ENCODE measurements at regions of chr3 and their contacts with region 1.

Region 1: GRCh38 chr3:32391643-32392535 is at the start of gene CMTM7:
- DNase-seq: peak; percentile 57 to 81 (median 67)
- H3K4me3 ChIP-seq: peak within 1 kb of the TSS; percentile 63 to 75
- H3K4me3 Mint-ChIP-seq: peak within 1 kb of the TSS; percentile 95 to 99 (median 97)
- H3K27ac ChIP-seq: peak within 1 kb of the TSS; percentile 76
- H3K27ac Mint-ChIP-seq: peak within 1 kb of the TSS; percentile 95 to 98 (median 97)
- H3K4me1 ChIP-seq: peaks cover 57% of the 10 kb centered on the region
- H3K4me1 Mint-ChIP-seq: peaks cover 36 to 64% (median 46%) of the 10 kb centered on the region in 4 donors
- H3K27me3 ChIP-seq: no peaks in the 10 kb centered on the region
- H3K27me3 Mint-ChIP-seq: no peaks in the 10 kb centered on the region
- total RNA-seq, gene CMTM7: 44.2 to 48.0 TPM

Region 2: DNA sequence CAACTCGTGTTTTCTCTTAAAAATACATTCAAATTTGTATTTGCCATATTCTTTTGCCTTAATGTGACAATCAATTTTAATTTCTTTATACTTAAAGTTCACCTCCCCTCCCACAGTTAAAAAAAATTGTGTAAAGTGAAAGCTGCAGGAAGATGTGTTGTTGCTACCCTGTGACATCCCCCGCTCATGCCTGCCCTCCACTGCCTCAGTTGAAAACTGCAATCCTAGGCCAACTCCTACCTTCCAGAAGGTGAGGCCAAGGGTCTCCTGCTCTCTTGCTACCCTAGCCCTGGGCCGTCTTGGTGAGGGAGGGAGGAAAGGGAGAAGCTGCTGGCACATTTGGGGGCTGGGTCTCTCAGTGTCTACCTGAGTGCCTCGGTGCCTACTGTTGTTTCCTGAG is 57.2 kb before region 1 on chr3:
- CTCF ChIA-PET with region 1: interaction called, 5 read pairs
- POLR2A ChIA-PET with region 1: no interaction called
- intact Hi-C with region 1: loop called (anchors 5 kb)
- DNase-seq: peak; percentile 54 to 63 (median 58)
- H3K4me3 ChIP-seq: no peak overlapping the region
- H3K4me3 Mint-ChIP-seq: peak overlapping the region in 7 of 8 donors; percentile 32 to 74 (median 55)
- H3K27ac ChIP-seq: peak overlapping the region; percentile 24
- H3K27ac Mint-ChIP-seq: peak overlapping the region; percentile 7 to 84 (median 75)
- H3K4me1 ChIP-seq: peaks cover 45% of the 10 kb centered on the region
- H3K4me1 Mint-ChIP-seq: peaks cover 39 to 60% (median 52%) of the 10 kb centered on the region in 4 donors
- H3K27me3 ChIP-seq: no peaks in the 10 kb centered on the region
- H3K27me3 Mint-ChIP-seq: no peaks in the 10 kb centered on the region

Region 3: GRCh38 chr3:32406486-32407408 is 14.9 kb after region 1 on chr3:
- CTCF ChIA-PET with region 1: no interaction called
- POLR2A ChIA-PET with region 1: interaction called, 10 read pairs
- intact Hi-C with region 1: loop called (anchors 1 kb)
- DNase-seq: peak in 1 of 5 donors; percentile 24
- H3K4me3 ChIP-seq: no peak overlapping the region
- H3K4me3 Mint-ChIP-seq: peak overlapping the region in 1 of 8 donors; percentile 12
- H3K27ac ChIP-seq: no peak overlapping the region
- H3K27ac Mint-ChIP-seq: peak overlapping the region in 3 of 7 donors; percentile 52 to 82 (median 68)
- H3K4me1 ChIP-seq: peaks cover 58% of the 10 kb centered on the region
- H3K4me1 Mint-ChIP-seq: peaks cover 49 to 83% (median 67%) of the 10 kb centered on the region in 4 donors
- H3K27me3 ChIP-seq: no peaks in the 10 kb centered on the region
- H3K27me3 Mint-ChIP-seq: no peaks in the 10 kb centered on the region

Region 4: DNA sequence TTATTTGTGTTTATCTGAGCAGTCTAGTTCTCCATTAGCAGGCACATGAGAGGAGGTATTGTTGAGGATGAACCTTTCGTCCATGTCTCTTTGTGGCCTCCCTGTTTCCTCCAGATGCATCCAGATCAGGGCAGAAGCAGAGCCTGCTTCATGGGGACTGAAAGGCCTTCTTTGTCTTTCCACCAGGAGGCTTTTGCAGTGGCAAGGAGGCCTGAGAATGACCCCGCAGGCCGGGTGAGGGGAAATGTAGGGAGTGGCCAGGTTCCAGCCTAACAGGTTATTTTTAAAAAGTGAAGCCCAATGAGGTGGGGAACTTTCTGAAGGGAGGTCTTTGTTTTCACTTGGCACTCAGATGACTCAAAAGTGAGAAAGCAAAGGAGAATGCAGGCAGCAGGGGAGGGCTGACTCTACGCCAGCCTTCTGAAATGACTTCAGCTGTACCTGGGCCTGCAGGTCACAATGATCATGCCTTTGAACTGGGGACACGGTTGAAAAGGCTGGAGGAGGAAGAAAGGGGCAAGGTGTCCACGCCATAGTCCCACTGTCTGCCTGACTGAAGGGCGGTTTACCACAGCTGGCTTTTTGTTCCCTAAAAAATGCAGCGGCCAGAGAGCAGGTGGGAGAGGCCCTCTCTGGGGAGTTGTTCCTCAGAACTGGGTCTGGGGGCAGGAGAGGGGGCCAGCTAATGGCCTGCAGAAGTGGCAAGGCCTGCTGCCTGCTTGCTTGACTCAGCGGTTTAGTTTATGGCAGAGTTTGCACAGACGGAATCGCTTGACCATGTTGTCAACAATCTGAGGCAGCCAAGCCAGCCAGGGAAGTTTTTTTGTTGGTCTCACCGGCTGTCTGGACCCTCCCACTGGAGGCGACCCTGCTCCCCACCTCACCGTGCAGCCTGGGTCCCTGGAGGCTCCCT is 28.5 kb after region 1 on chr3:
- CTCF ChIA-PET with region 1: interaction called, 4 read pairs
- POLR2A ChIA-PET with region 1: interaction called, 22 read pairs
- intact Hi-C with region 1: loop called (anchors 5 kb)
- DNase-seq: no peak
- H3K4me3 ChIP-seq: no peak overlapping the region
- H3K4me3 Mint-ChIP-seq: peak overlapping the region in 7 of 8 donors; percentile 31 to 76 (median 70)
- H3K27ac ChIP-seq: peak overlapping the region; percentile 18
- H3K27ac Mint-ChIP-seq: peak overlapping the region; percentile 3 to 96 (median 92)
- H3K4me1 ChIP-seq: peaks cover 94% of the 10 kb centered on the region
- H3K4me1 Mint-ChIP-seq: peaks cover 66 to 100% (median 89%) of the 10 kb centered on the region in 4 donors
- H3K27me3 ChIP-seq: no peaks in the 10 kb centered on the region
- H3K27me3 Mint-ChIP-seq: no peaks in the 10 kb centered on the region

Region 5: GRCh38 chr3:32684800-32685542 is 293.1 kb after region 1 on chr3 and contains the start of gene CNOT10:
- CTCF ChIA-PET with region 1: no interaction called
- POLR2A ChIA-PET with region 1: no interaction called
- intact Hi-C with region 1: loop called (anchors 2 kb)
- DNase-seq: peak; percentile 95 to 98 (median 97)
- H3K4me3 ChIP-seq: peak within 1 kb of the TSS; percentile 50 to 95
- H3K4me3 Mint-ChIP-seq: peak within 1 kb of the TSS; percentile 90 to 94 (median 93)
- H3K27ac ChIP-seq: peak within 1 kb of the TSS; percentile 80
- H3K27ac Mint-ChIP-seq: peak within 1 kb of the TSS; percentile 87 to 99 (median 97)
- H3K4me1 ChIP-seq: peaks cover 30% of the 10 kb centered on the region
- H3K4me1 Mint-ChIP-seq: peaks cover 28 to 45% (median 37%) of the 10 kb centered on the region in 4 donors
- H3K27me3 ChIP-seq: no peaks in the 10 kb centered on the region
- H3K27me3 Mint-ChIP-seq: no peaks in the 10 kb centered on the region
- total RNA-seq, gene CNOT10: 46.5 to 47.6 TPM

Measured in CD4-positive, alpha-beta memory T cell (primary cell).